PC-3 (cell line): ENCODE measurements at regions of chr5 and their contacts with region 1.

Region 1: DNA sequence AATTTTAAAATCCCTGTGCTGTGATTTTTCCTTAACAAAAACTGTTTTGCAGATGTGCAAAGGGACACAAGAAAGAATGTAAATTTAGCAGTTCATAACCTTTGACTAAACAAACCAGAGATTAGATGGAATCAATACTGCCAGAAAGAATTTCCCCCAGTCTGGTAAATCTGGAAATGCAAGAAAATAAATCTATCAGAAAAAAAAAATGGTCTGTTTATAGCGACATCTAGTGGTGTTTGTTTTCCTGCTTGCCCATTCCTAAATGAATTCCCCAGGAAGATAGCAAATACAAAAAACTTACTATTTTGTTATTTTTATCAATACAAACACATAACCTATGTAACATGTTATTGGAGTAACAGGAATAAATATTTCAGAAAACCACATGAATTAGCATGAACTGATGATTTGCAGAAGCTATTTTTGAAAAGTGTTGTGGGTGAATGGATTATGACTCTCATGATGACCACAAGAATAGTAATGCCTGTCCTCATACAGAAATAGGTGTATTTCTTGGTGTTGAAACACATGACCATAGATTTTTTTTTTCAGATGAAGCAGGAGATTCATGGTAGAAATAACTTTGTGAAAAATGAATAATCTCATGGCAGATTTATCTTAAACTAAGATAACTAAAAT is 1703.8 kb downstream of the MAT2B start:
- DNase-seq: peak; percentile 53
- ATAC-seq: no peak
- H3K4me3 ChIP-seq: no peak overlapping the region
- H3K27ac ChIP-seq: no peak overlapping the region
- H3K4me1 ChIP-seq: no peaks in the 10 kb centered on the region
- H3K27me3 ChIP-seq: no peaks in the 10 kb centered on the region
- CTCF ChIP-seq: peak; percentile 70

Region 2: DNA sequence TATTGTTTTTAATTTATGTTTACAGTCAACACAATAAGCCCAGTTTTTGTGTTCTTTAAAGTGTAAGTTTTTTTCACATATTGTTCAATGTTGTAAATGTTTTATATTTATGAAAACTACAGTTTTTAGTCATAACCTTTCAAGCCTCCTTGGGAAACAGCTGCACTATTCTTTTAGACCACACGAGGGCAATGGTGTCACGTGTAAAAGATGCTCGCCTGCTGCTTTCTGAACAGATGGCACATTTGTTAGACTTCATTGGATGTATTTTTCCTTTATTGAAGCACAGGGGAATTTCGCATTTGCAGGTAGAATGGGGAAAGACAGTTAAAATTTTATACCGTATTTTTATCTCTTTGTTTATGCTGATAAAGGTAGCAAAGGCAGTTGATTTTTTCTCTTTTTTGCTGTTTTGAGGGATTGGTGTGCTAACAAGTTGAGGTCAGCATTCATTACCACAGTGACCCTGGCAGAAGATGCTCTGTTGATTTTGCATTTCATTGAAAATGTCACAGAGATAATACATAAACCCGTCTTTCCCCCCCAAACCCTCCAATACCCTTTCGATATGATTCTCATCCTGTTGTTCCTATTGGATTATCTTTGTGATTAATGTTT is 1644.8 kb before region 1 on chr5:
- CTCF ChIA-PET with region 1: no interaction called
- POLR2A ChIA-PET with region 1: no interaction called
- intact Hi-C with region 1: loop called (anchors 1 kb)
- DNase-seq: peak; percentile 84
- ATAC-seq: no peak
- H3K4me3 ChIP-seq: no peak overlapping the region
- H3K27ac ChIP-seq: no peak overlapping the region
- H3K4me1 ChIP-seq: peaks cover 14% of the 10 kb centered on the region
- H3K27me3 ChIP-seq: peaks cover 57% of the 10 kb centered on the region
- CTCF ChIP-seq: peak; percentile 93

Region 3: GRCh38 chr5:164958688-164959087 is 250.5 kb before region 1 on chr5:
- CTCF ChIA-PET with region 1: no interaction called
- POLR2A ChIA-PET with region 1: no interaction called
- intact Hi-C with region 1: loop called (anchors 1 kb)
- DNase-seq: peak; percentile 2
- ATAC-seq: no peak
- H3K4me3 ChIP-seq: no peak overlapping the region
- H3K27ac ChIP-seq: no peak overlapping the region
- H3K4me1 ChIP-seq: no peaks in the 10 kb centered on the region
- H3K27me3 ChIP-seq: no peaks in the 10 kb centered on the region
- CTCF ChIP-seq: 0 out of 2 replicates have a peak, but pooled peaks have one; percentile 13

Region 4: DNA sequence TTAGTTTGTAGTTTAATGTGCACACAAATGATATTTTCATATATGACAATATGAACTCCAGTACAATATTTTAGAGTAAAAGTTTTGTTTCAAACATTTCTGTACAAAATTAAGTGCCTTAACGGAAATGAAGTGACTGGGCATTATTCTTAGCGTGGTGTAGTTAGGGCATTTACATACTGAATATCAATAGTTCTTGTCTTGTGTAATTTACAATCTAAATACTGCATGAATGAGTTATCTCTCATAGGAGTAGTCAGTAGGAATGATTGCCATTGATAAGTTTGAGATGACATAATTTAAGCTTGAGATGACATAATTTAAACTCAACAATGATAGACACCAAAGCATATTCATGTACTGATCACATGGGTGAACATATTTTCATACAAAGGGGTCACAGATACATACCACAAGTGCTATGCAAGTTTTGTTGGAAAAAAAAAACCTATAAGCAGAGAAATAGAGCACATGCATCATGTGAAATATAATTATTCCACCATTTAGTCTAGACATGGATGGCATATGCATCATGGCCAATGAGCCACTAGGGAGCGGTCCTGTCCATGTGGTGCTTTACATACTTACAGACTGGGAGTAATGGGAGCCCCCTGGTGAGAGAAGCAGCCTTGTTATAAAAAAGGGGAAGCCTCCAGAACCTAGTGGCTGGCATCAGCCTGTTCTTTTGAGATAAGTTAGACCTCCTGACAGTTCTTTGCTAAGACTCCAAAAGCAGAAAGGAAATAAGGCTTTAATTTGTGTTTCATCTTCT is 179.9 kb before region 1 on chr5:
- CTCF ChIA-PET with region 1: no interaction called
- POLR2A ChIA-PET with region 1: no interaction called
- intact Hi-C with region 1: loop called (anchors 1 kb)
- DNase-seq: no peak
- ATAC-seq: peak; percentile 37; the same call in 1 of the 2 replicates
- H3K4me3 ChIP-seq: no peak overlapping the region
- H3K27ac ChIP-seq: no peak overlapping the region
- H3K4me1 ChIP-seq: no peaks in the 10 kb centered on the region
- H3K27me3 ChIP-seq: no peaks in the 10 kb centered on the region
- CTCF ChIP-seq: no peak; the same call in 1 of the 2 replicates